Caco-2 (cell line): ENCODE measurements at regions of chr7 and their contacts with region 1.

Region 1: DNA sequence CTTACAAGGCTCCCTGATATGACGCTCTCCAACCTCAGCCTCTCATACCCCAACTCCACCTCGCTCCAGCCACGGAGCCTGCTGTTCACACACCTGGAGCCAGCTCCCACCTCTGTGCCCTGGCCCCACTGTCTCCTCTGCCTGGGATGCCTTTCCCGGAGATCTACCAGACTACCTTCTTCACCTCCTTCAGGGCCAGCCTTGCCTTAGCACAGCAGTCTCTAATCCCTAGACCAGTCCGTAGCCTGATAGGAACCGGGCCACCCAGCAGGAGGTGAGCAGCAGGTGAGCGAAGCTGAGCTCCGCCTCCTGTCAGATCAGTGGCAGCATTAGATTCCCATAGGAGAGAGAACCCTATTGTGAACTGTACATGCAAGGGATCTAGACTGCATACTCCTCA is 23.2 kb upstream of the SMURF1 start:
- DNase-seq: peak in 1 of 2 experiments; percentile 5
- H3K4me3 ChIP-seq: no peak overlapping the region
- H3K4me3 Mint-ChIP-seq: no peak overlapping the region
- H3K27ac Mint-ChIP-seq: no peak overlapping the region
- H3K4me1 ChIP-seq: peaks cover 3% of the 10 kb centered on the region; the same call in 1 of the 2 replicates
- H3K4me1 Mint-ChIP-seq: no peaks in the 10 kb centered on the region
- H3K27me3 ChIP-seq: no peaks in the 10 kb centered on the region
- H3K27me3 Mint-ChIP-seq: no peaks in the 10 kb centered on the region
- CTCF ChIP-seq: no peak

Region 2: GRCh38 chr7:99021941-99022560 is 145.0 kb before region 1 on chr7:
- CTCF ChIA-PET with region 1: no interaction called
- POLR2A ChIA-PET with region 1: no interaction called
- intact Hi-C with region 1: no loop called
- DNase-seq: no peak
- H3K4me3 ChIP-seq: no peak overlapping the region
- H3K4me3 Mint-ChIP-seq: no peak overlapping the region
- H3K27ac Mint-ChIP-seq: peak overlapping the region; percentile 48
- H3K4me1 ChIP-seq: no peaks in the 10 kb centered on the region
- H3K4me1 Mint-ChIP-seq: peaks cover 7% of the 10 kb centered on the region
- H3K27me3 ChIP-seq: no peaks in the 10 kb centered on the region
- H3K27me3 Mint-ChIP-seq: no peaks in the 10 kb centered on the region
- CTCF ChIP-seq: no peak

Region 3: DNA sequence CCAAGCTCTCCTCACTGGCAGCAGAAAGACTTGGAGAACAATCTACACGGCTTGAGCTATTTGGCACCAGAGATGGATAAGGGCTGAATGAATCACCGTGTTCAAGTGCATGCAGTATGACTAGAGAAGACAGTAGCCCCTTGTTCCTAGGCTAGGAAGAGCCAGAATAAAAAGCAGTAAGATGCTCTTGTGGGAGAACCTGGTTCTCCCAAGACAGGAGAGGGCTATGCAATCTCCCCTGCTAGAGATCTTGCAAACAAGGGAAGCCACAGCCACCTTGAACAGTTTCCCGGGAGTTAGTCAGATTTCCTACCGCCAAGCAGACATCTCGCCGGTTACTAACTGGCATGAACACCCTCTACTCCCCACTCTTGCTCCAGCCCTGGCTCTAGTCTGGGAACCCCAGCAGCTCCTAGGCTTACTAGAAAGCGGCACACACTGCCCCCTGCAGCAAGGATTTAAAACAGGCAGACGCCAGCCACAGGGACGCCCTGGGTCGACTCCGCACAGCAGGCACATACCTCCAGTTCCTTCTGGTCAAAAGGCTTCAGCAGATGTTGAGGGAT is 130.4 kb before region 1 on chr7:
- CTCF ChIA-PET with region 1: no interaction called
- POLR2A ChIA-PET with region 1: no interaction called
- intact Hi-C with region 1: no loop called
- DNase-seq: peak in 1 of 2 experiments; percentile 45
- H3K4me3 ChIP-seq: no peak overlapping the region
- H3K4me3 Mint-ChIP-seq: no peak overlapping the region
- H3K27ac Mint-ChIP-seq: no peak overlapping the region
- H3K4me1 ChIP-seq: no peaks in the 10 kb centered on the region
- H3K4me1 Mint-ChIP-seq: peaks cover 13% of the 10 kb centered on the region
- H3K27me3 ChIP-seq: no peaks in the 10 kb centered on the region
- H3K27me3 Mint-ChIP-seq: no peaks in the 10 kb centered on the region
- CTCF ChIP-seq: peak; percentile 42

Region 4: DNA sequence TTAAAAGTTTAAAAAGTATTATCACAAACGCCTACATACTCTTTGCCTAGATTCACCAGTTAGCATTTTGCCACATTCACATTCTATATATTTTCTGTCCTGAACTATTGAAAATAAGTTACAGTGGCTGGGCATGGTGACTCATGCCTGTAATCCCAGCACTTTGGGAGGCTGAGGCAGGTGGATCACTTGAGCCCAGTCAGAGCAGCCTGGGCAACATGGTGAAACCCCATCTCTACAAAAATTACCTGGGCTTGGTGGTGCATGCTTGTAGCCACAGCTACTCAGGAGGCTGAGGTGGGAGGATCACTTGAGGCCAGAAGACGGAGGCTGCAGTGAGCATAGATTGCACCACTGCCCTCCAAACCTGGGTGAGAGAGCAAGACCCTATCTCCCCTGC is 163.9 kb after region 1 on chr7:
- CTCF ChIA-PET with region 1: interaction called, 12 read pairs
- POLR2A ChIA-PET with region 1: no interaction called
- intact Hi-C with region 1: no loop called
- DNase-seq: no peak
- H3K4me3 ChIP-seq: no peak overlapping the region
- H3K4me3 Mint-ChIP-seq: peak overlapping the region; percentile 46
- H3K27ac Mint-ChIP-seq: peak overlapping the region; percentile 91
- H3K4me1 ChIP-seq: peaks cover 10% of the 10 kb centered on the region
- H3K4me1 Mint-ChIP-seq: peaks cover 15% of the 10 kb centered on the region
- H3K27me3 ChIP-seq: no peaks in the 10 kb centered on the region
- H3K27me3 Mint-ChIP-seq: no peaks in the 10 kb centered on the region
- CTCF ChIP-seq: no peak